HepG2 (cell line): ENCODE measurements at regions of chr16 and their contacts with region 1.

Region 1: DNA sequence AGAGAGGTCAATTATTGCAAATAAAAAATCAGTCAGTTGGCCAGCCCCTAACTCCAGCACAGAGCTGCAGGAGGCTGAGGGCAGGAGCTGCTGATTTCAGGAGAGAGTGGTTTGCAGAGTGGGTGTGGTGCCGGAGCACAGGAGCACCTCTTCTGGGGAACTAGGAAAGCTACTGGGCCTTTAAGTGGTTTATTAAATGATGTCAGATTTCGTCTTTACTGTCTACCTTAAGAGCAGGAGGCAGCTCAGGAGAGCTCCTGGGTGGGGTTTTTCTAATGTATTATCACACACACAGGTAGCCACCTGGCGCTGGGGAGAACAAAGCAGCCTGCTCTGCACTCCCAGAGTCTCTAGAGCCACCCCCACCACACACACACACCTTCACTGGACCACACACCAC is 11.5 kb upstream of the HAS3 start:
- DNase-seq: no peak
- ATAC-seq: no peak
- H3K4me3 ChIP-seq: no peak overlapping the region
- H3K27ac ChIP-seq: no peak overlapping the region
- H3K4me1 ChIP-seq: peaks cover 34% of the 10 kb centered on the region
- H3K27me3 ChIP-seq: no peaks in the 10 kb centered on the region
- CTCF ChIP-seq: no peak
- EP300 ChIP-seq: no peak
- POLR2A ChIP-seq: no peak
- RAD21 ChIP-seq: no peak

Region 2: DNA sequence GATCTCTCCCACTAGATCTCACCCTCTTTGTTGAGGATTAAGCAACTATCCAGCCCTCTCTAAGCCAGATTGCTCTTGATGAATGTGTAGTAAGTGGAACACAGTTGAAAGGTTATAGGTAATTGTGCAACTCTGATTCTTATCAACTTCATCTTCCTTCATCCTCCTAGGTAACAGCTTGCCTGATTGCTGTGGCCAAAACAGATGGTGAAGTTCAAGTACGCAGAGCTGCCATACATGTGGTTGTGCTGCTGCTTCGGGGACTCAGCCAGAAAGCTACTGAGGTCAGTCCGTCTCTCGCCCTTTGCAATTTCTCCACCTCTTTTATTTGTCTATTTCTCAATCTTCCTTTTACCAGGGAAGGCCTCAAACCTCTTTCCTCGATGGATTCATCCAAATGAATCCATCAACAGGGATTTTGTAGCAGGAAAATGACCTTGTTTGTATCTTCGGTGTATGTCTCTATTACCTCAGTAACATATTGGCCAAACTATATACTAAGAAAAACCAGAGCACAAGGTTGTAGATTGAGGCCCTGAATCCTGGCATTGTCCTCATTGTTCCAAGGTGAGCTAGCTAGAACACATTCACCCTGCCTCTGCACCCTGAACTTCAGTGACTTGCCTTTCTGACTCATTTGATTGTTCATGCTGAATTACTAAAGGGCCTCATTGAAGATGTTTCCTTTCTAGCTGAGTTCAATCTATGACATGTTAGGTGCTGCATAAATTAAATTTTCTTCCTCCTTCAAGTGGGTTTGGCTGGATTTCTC is 53.6 kb before region 1 on chr16:
- CTCF ChIA-PET with region 1: no interaction called
- POLR2A ChIA-PET with region 1: no interaction called
- in situ Hi-C with region 1: no loop called
- intact Hi-C with region 1: loop called (anchors 10 kb)
- DNase-seq: peak; percentile 89
- ATAC-seq: peak; percentile 86
- H3K4me3 ChIP-seq: peak overlapping the region in 1 of 3 experiments; percentile 12; a peak in 1 of 6 replicates
- H3K27ac ChIP-seq: peak overlapping the region; percentile 68
- H3K4me1 ChIP-seq: peaks cover 23% of the 10 kb centered on the region
- H3K27me3 ChIP-seq: no peaks in the 10 kb centered on the region
- CTCF ChIP-seq: no peak
- EP300 ChIP-seq: peak in 1 of 2 experiments; percentile 64; a peak in 2 of 4 replicates
- POLR2A ChIP-seq: no peak; a peak in 1 of 4 replicates
- RAD21 ChIP-seq: no peak